Gastrocnemius medialis (tissue), 4 donors: ENCODE measurements at regions of chr2 and their contacts with region 1.

Region 1: GRCh38 chr2:201118121-201118960 is 2.4 kb downstream of the CFLAR start:
- DNase-seq: peak; percentile 95 to 98
- ATAC-seq: peak; percentile 53
- H3K4me3 ChIP-seq: peak overlapping the region; percentile 70 to 95 (median 82)
- H3K27ac ChIP-seq: peak overlapping the region; percentile 95 to 100 (median 98)
- H3K4me1 ChIP-seq: peaks cover 30 to 33% of the 10 kb centered on the region in 2 donors
- H3K27me3 ChIP-seq: no peaks in the 10 kb centered on the region
- CTCF ChIP-seq: peak in 3 of 5 experiments; percentile 35 to 49 (median 37)
- POLR2A ChIP-seq: peak; percentile 68 to 87

Region 2: GRCh38 chr2:200373973-200374416 is 744.3 kb before region 1 on chr2:
- in situ Hi-C with region 1: no loop called
- intact Hi-C with region 1: loop called (anchors 5 kb)
- DNase-seq: no peak
- ATAC-seq: no peak
- H3K4me3 ChIP-seq: peak overlapping the region in 1 of 4 donors; percentile 28
- H3K27ac ChIP-seq: peak overlapping the region; percentile 20 to 88 (median 86)
- H3K4me1 ChIP-seq: peaks cover 53 to 70% of the 10 kb centered on the region in 2 donors
- H3K27me3 ChIP-seq: no peaks in the 10 kb centered on the region
- CTCF ChIP-seq: no peak
- POLR2A ChIP-seq: no peak

Region 3: DNA sequence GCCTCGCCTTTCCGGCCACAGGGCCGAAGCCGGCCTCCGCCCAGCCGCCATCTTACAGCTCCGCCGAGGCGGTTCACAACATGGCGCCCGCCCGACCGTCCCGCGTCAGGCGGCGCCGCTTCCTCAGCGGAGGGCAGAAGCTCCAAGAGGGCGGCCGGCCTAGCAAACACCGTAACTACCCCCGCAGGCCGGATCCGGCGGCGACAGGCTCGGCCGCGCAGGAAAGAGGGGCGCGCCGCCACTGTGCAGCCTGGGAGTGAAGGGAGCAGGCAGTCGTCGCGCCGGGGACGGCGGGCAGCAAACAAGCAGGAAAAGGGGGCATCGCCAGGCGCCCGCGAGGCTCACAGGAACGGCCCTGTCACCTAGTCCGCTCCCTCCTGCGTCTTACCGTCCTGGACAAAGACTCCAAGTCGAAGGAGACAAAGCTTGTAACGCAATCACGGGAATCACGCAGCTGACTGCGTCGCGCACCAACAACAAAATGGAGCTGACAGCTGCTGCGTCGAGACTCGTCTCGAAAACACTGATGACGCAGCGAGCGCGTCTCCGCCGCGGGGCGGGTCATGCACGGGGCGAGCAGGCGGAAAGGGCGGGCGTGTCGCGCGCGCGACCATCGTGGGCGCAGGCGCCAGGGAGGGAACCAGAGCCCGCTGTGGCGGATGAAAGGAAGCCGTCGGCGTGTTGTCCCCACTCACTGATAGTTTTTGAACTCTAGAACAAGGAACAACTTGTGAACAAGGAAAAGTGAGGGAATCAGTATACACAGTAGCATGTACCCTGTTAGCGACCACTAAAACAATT is 254.0 kb before region 1 on chr2 and contains the start of gene CLK1:
- in situ Hi-C with region 1: no loop called
- intact Hi-C with region 1: loop called (anchors 2 kb)
- DNase-seq: peak; percentile 94 to 96
- ATAC-seq: peak; percentile 81 to 83
- H3K4me3 ChIP-seq: peak within 1 kb of the TSS; percentile 97 to 99 (median 98)
- H3K27ac ChIP-seq: peak within 1 kb of the TSS; percentile 100
- H3K4me1 ChIP-seq: peaks cover 28 to 34% of the 10 kb centered on the region in 2 donors
- H3K27me3 ChIP-seq: no peaks in the 10 kb centered on the region
- CTCF ChIP-seq: peak in 1 of 5 experiments; percentile 18
- POLR2A ChIP-seq: peak; percentile 99
- total RNA-seq, gene CLK1: 61.6 to 104 (median 85.3) TPM

Region 4: GRCh38 chr2:201130524-201131186 is 12.3 kb after region 1 on chr2:
- in situ Hi-C with region 1: no loop called
- intact Hi-C with region 1: loop called (anchors 1 kb)
- DNase-seq: peak; percentile 59 to 60
- ATAC-seq: peak; percentile 76 to 84
- H3K4me3 ChIP-seq: peak overlapping the region; percentile 25 to 95 (median 62)
- H3K27ac ChIP-seq: peak overlapping the region; percentile 95 to 100 (median 98)
- H3K4me1 ChIP-seq: peaks cover 74 to 86% of the 10 kb centered on the region in 2 donors
- H3K27me3 ChIP-seq: no peaks in the 10 kb centered on the region
- CTCF ChIP-seq: no peak
- POLR2A ChIP-seq: peak; percentile 52 to 75

Region 5: DNA sequence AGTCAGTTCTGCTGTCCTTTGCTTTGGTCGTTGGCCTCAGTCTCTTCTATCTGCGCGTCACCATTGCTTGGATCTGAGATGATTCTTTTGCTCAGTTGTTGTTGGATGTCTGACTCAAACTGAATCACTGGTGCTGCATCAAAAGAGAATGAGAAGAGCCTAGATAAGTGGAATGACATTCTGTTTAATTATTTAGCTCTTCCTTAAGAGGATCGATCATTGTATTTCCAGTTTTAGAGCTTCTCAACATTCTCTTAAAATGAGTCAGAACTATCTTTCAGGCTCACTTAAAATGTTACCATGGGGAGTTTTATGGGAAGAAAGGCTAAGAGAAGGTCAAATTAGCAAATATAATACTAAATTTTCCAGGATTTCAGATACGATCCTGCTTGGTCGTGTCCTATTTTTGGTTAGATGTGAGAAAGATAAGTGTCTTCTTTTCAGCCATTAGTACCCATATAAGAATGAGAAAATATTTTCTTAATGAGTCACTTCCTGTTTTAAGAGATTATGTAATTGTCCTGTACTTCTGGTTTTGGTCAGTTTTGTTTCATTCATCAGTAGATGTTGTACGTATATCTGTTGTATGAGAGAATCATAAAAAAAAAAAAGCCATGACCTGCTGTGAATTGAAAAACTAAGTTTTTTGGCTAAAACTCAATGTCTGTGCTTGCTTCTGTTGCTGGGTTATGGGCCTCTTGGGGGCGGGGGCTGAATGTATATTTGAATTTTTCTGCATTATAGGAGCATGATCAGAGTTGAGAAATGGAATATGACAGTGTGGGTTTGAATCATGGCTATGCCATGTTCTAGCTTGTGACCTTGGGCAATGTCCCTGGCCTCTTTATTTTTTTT is 33.0 kb after region 1 on chr2:
- in situ Hi-C with region 1: loop called in 1 of 4 experiments (anchors 5 kb)
- intact Hi-C with region 1: no loop called
- DNase-seq: no peak
- ATAC-seq: no peak
- H3K4me3 ChIP-seq: no peak overlapping the region
- H3K27ac ChIP-seq: peak overlapping the region; percentile 66 to 81 (median 76)
- H3K4me1 ChIP-seq: peaks cover 21 to 58% of the 10 kb centered on the region in 2 donors
- H3K27me3 ChIP-seq: no peaks in the 10 kb centered on the region
- CTCF ChIP-seq: no peak
- POLR2A ChIP-seq: no peak